IMR-90 (cell line): ENCODE measurements at regions of chr12 and their contacts with region 1.

Region 1: DNA sequence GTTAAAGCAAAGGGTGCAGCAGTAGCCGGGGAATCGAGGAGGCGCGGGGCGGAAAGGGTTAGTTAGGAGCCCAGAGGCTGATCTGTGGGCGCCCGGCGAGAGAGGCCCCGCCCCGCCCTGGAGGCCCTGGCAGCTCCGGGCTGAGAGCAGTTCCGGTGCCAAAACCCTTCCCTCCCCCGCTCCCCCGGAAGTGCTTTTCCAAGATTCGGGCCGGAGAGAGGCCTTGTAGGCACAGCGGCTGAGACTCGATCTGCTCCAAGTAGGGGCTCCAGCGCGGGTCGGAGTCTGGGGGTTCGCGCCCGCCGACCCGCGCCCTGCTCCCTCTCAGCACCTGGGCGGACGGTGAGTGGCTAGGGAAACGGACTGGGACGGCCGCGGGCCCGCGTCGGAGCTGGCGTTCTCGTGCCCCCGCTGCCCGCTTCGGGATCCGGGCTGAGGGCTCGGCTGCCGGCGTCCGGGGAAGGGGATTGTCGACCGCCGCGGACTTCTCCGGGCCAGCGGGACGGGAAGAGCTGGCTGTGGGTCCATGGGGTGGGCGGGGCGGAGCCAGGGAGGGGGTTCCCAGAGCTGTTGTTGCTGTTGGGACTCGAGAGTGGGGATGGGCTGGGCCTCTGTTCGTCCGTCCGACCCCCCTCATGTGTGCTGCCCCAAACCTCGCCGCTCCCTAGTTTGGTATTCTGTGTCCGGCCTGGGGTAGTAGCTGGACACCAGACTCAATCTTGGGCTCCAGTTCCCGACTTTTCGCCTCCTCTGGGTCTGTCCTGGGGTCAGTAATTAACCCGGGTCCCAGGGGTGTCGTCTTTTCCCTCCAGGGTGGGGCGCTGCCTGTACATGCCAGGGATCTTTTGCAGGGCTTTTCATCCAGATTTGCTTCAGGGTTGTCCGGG is at the start of gene FRS2:
- DNase-seq: peak; percentile 86
- ATAC-seq: peak; percentile 93
- H3K4me3 ChIP-seq: peak within 1 kb of the TSS; percentile 87
- H3K27ac ChIP-seq: peak within 1 kb of the TSS; percentile 90
- H3K4me1 ChIP-seq: peaks cover 9% of the 10 kb centered on the region
- H3K27me3 ChIP-seq: no peaks in the 10 kb centered on the region
- CTCF ChIP-seq: peak; percentile 46
- POLR2A ChIP-seq: peak; percentile 89
- RAD21 ChIP-seq: peak; percentile 59
- total RNA-seq, gene FRS2: 58.3 and 65.8 TPM in 2 replicates

Region 2: DNA sequence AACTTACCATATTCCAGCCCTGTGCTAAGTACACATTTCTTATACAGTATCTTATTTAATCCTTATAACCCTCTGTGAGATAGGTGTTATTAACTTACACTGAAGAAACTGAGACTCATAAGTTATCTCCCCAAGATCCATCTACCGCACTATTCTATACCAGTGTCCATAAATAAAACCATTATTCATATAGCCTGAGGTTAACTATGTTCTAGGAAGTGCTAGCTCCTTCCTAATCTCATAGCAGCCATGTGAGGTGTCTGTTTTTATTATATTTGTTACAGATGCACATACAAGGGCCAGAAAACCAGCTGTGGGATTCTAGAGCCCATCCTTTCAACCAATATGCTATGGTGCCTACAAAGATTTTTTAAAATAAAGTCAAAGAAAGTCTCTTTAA is 960.0 kb before region 1 on chr12:
- CTCF ChIA-PET with region 1: no interaction called
- POLR2A ChIA-PET with region 1: no interaction called
- dilution Hi-C with region 1: no loop called
- in situ Hi-C with region 1: no loop called
- intact Hi-C with region 1: no loop called
- DNase-seq: no peak
- ATAC-seq: no peak
- H3K4me3 ChIP-seq: no peak overlapping the region
- H3K27ac ChIP-seq: no peak overlapping the region
- H3K4me1 ChIP-seq: no peaks in the 10 kb centered on the region
- H3K27me3 ChIP-seq: peaks cover 2% of the 10 kb centered on the region; the same call in 1 of the 2 replicates
- CTCF ChIP-seq: no peak
- POLR2A ChIP-seq: no peak
- RAD21 ChIP-seq: no peak

Region 3: GRCh38 chr12:69388371-69388770 is 82.1 kb before region 1 on chr12:
- CTCF ChIA-PET with region 1: interaction called, 3 read pairs
- POLR2A ChIA-PET with region 1: no interaction called
- dilution Hi-C with region 1: no loop called
- in situ Hi-C with region 1: no loop called
- intact Hi-C with region 1: loop called (anchors 1 kb)
- DNase-seq: peak; percentile 81
- ATAC-seq: peak; percentile 81
- H3K4me3 ChIP-seq: no peak overlapping the region
- H3K27ac ChIP-seq: no peak overlapping the region
- H3K4me1 ChIP-seq: no peaks in the 10 kb centered on the region; the same call in 1 of the 2 replicates
- H3K27me3 ChIP-seq: no peaks in the 10 kb centered on the region
- CTCF ChIP-seq: peak; percentile 88
- POLR2A ChIP-seq: no peak
- RAD21 ChIP-seq: peak; percentile 84

Region 4: GRCh38 chr12:69415471-69416275 is 54.8 kb before region 1 on chr12:
- CTCF ChIA-PET with region 1: no interaction called
- POLR2A ChIA-PET with region 1: no interaction called
- dilution Hi-C with region 1: no loop called
- in situ Hi-C with region 1: no loop called
- intact Hi-C with region 1: loop called (anchors 5 kb)
- DNase-seq: peak; percentile 95
- ATAC-seq: peak; percentile 96
- H3K4me3 ChIP-seq: no peak overlapping the region
- H3K27ac ChIP-seq: peak overlapping the region; percentile 28; the same call in 1 of the 2 replicates
- H3K4me1 ChIP-seq: peaks cover 11% of the 10 kb centered on the region
- H3K27me3 ChIP-seq: no peaks in the 10 kb centered on the region
- CTCF ChIP-seq: peak; percentile 88
- POLR2A ChIP-seq: no peak
- RAD21 ChIP-seq: peak; percentile 75

Region 5: DNA sequence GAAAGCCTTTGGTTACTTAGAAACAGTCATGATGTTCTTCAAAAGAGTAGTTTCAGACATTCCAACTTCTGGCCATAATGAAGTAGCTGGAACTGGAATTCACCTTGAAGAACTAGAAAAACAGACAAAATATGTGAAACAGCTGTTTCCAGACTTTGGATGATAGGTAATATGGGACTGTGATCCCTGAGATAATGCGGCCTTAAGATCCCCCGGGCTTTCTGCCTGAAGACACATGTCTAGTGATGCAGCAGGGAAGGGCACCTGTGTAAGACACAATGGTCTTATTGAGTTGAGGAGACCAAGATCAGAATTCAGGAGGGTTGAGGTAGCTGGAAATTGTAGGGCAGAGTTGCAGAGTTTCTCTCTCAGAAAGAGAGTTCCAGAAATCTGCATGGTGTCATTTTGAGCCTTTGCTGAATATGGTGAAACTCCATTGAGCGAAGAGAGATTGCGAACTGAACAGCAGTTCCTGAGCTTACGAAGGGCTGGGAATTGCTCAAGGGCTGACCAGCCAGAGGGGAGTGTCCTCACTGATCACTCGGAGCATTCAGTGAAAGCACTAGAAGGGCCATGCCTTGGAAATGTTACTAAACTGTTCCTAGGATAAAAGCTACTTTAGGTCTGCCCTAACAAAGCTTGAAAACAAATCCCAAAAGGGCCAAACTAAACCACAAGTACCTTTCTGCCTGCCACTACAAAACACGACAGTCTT is 41.9 kb before region 1 on chr12:
- CTCF ChIA-PET with region 1: no interaction called
- POLR2A ChIA-PET with region 1: no interaction called
- dilution Hi-C with region 1: no loop called
- in situ Hi-C with region 1: no loop called
- intact Hi-C with region 1: loop called (anchors 5 kb)
- DNase-seq: peak; percentile 3
- ATAC-seq: peak; percentile 17; the same call in 1 of the 2 replicates
- H3K4me3 ChIP-seq: no peak overlapping the region
- H3K27ac ChIP-seq: no peak overlapping the region
- H3K4me1 ChIP-seq: no peaks in the 10 kb centered on the region
- H3K27me3 ChIP-seq: no peaks in the 10 kb centered on the region
- CTCF ChIP-seq: no peak
- POLR2A ChIP-seq: no peak
- RAD21 ChIP-seq: no peak

Region 6: GRCh38 chr12:69534389-69534822 is 64.0 kb after region 1 on chr12:
- CTCF ChIA-PET with region 1: no interaction called
- POLR2A ChIA-PET with region 1: no interaction called
- dilution Hi-C with region 1: no loop called
- in situ Hi-C with region 1: no loop called
- intact Hi-C with region 1: loop called (anchors 2 kb)
- DNase-seq: peak; percentile 100
- ATAC-seq: peak; percentile 99
- H3K4me3 ChIP-seq: no peak overlapping the region
- H3K27ac ChIP-seq: peak overlapping the region; percentile 12; the same call in 1 of the 2 replicates
- H3K4me1 ChIP-seq: no peaks in the 10 kb centered on the region; the same call in 1 of the 2 replicates
- H3K27me3 ChIP-seq: no peaks in the 10 kb centered on the region
- CTCF ChIP-seq: no peak
- POLR2A ChIP-seq: peak; percentile 70
- RAD21 ChIP-seq: no peak; the same call in 1 of the 2 replicates

Region 7: GRCh38 chr12:69570545-69571399 is 100.3 kb after region 1 on chr12:
- CTCF ChIA-PET with region 1: interaction called, 5 read pairs
- POLR2A ChIA-PET with region 1: no interaction called
- dilution Hi-C with region 1: no loop called
- in situ Hi-C with region 1: loop called (anchors 10 kb)
- intact Hi-C with region 1: loop called (anchors 2 kb)
- DNase-seq: peak; percentile 69
- ATAC-seq: peak; percentile 74; the same call in 1 of the 2 replicates
- H3K4me3 ChIP-seq: no peak overlapping the region
- H3K27ac ChIP-seq: no peak overlapping the region
- H3K4me1 ChIP-seq: peaks cover 4% of the 10 kb centered on the region; the same call in 1 of the 2 replicates
- H3K27me3 ChIP-seq: no peaks in the 10 kb centered on the region
- CTCF ChIP-seq: peak; percentile 77
- POLR2A ChIP-seq: no peak
- RAD21 ChIP-seq: peak; percentile 82